Spleen (tissue), 13 donors: ENCODE measurements at regions of chr19 and their contacts with region 1.

Region 1: DNA sequence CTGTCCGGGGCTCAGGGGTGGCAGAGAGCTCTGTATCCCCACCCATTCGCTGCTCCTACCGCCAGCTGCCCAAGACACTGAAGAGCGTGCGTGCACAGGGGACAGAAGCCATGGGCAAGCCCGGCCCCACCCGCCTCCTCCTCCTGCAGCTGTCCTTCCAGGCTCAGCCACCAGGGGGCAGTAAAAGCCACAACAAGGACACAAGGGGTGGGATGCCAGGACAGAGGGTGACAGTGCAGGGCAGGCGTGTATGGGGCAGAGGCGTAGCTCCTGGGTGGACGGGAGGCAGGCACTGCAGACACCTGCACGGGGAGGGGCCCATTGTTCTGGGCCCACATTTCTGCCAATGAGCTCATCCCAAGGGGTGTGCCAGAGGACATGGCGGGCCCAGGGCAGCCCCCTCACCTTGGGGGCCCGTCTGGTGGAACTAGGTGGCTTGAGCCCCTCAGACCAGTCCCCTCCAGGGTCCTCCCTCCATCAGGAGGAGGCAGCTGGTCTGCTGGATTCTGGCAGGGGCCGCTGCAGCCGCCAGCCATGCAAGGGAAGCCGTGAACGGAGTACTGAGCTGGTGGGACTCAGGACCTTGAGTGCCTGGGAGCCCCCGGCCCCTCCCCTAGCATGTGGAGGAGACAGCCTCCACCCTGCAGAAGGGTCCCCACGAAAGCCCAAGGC is 61.1 kb downstream of the MLLT1 start:
- DNase-seq: peak; percentile 94
- H3K4me3 ChIP-seq: no peak overlapping the region
- H3K27ac ChIP-seq: peak overlapping the region in 2 of 8 donors; percentile 49 to 55
- H3K4me1 ChIP-seq: peaks cover 3 to 69% (median 42%) of the 10 kb centered on the region in 6 donors
- H3K27me3 ChIP-seq: no peaks in the 10 kb centered on the region
- CTCF ChIP-seq: peak; percentile 96 to 99 (median 99)
- POLR2A ChIP-seq: no peak

Region 2: GRCh38 chr19:6263735-6264444 is 45.3 kb after region 1 on chr19:
- intact Hi-C with region 1: no loop called
- DNase-seq: no peak
- H3K4me3 ChIP-seq: no peak overlapping the region
- H3K27ac ChIP-seq: no peak overlapping the region
- H3K4me1 ChIP-seq: peaks cover 0 to 41% (median 15%) of the 10 kb centered on the region in 6 donors
- H3K27me3 ChIP-seq: no peaks in the 10 kb centered on the region
- CTCF ChIP-seq: no peak
- POLR2A ChIP-seq: no peak

Region 3: GRCh38 chr19:6279931-6280591 is 61.4 kb after region 1 on chr19 and contains the start of gene MLLT1:
- intact Hi-C with region 1: loop called (anchors 5 kb)
- DNase-seq: peak; percentile 99
- H3K4me3 ChIP-seq: peak within 1 kb of the TSS; percentile 60 to 91 (median 70)
- H3K27ac ChIP-seq: peak within 1 kb of the TSS; percentile 22 to 90 (median 76)
- H3K4me1 ChIP-seq: peaks cover 26 to 49% (median 46%) of the 10 kb centered on the region in 6 donors
- H3K27me3 ChIP-seq: no peaks in the 10 kb centered on the region
- CTCF ChIP-seq: peak in 9 of 11 experiments; percentile 18 to 95 (median 92)
- POLR2A ChIP-seq: no peak
- total RNA-seq, gene MLLT1: 18.9 to 57.2 (median 41.3) TPM

Region 4: GRCh38 chr19:6312018-6312417 is 93.4 kb after region 1 on chr19:
- intact Hi-C with region 1: loop called (anchors 10 kb)
- DNase-seq: no peak
- H3K4me3 ChIP-seq: no peak overlapping the region
- H3K27ac ChIP-seq: no peak overlapping the region
- H3K4me1 ChIP-seq: no peaks in the 10 kb centered on the region
- H3K27me3 ChIP-seq: peaks cover 0 to 35% (median 0%) of the 10 kb centered on the region in 7 donors
- CTCF ChIP-seq: no peak
- POLR2A ChIP-seq: no peak